ENCODE measurements at regions of chr17 and their contacts with region 1.

Region 1: GRCh38 chr17:59829217-59830006 is 63.3 kb downstream of the TUBD1 start:
- DNase-seq: peak; percentile 57
- H3K4me3 Mint-ChIP-seq: peak overlapping the region; percentile 85
- H3K27ac Mint-ChIP-seq: peak overlapping the region; percentile 99
- H3K4me1 Mint-ChIP-seq: peaks cover 64% of the 10 kb centered on the region
- H3K27me3 Mint-ChIP-seq: no peaks in the 10 kb centered on the region

Region 2: DNA sequence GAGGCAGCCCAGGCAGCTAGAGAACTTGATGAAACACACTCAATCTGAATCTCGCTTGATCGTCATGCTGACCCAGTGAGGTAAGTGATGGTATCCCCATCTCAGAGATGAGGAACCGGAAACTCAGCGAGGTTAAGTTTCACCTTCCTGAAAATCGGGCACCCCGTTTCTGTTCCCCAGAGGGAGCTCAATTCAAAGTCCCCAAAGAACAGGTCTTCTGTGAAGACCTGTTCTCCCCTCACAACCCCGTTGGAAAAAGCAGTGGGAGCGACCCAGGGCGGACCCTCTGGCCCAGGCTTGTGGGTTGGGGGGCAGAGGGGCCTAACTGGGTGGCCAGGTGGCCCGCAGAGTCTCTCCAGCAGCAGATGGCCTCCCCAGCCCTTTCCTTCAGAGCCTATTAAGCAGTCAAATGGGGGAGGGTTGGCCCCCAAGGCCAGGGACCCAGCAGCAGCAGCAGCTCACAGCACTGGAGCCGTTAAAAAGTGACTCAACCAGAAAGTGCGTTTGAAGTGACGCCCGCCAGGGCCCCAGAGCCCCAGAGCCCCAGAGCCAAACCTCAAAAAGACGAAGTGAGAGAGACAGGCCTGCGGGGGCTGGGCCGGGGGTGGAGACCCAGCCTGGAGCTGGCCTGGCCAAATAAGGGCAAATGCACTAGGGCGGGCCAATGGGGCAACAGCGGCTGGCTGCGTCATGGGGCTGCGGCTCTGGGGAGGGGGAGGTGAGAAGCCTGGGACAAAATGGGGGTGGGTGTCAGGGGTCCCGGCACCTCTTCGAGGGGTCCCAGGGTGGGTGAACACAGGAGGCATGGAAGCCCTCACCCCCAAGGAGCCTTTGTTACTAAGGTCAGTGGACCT is 1491.6 kb before region 1 on chr17:
- intact Hi-C with region 1: loop called (anchors 5 kb)
- DNase-seq: peak; percentile 93
- H3K4me3 Mint-ChIP-seq: peak overlapping the region; percentile 99
- H3K27ac Mint-ChIP-seq: peak overlapping the region; percentile 99
- H3K4me1 Mint-ChIP-seq: peaks cover 35% of the 10 kb centered on the region
- H3K27me3 Mint-ChIP-seq: no peaks in the 10 kb centered on the region

Region 3: GRCh38 chr17:59361916-59362810 is 467.2 kb before region 1 on chr17:
- intact Hi-C with region 1: loop called (anchors 10 kb)
- DNase-seq: peak; percentile 49
- H3K4me3 Mint-ChIP-seq: peak overlapping the region; percentile 72
- H3K27ac Mint-ChIP-seq: peak overlapping the region; percentile 95
- H3K4me1 Mint-ChIP-seq: peaks cover 65% of the 10 kb centered on the region
- H3K27me3 Mint-ChIP-seq: no peaks in the 10 kb centered on the region

Region 4: GRCh38 chr17:59688008-59688407 is 141.4 kb before region 1 on chr17:
- intact Hi-C with region 1: no loop called
- DNase-seq: no peak
- H3K4me3 Mint-ChIP-seq: no peak overlapping the region
- H3K27ac Mint-ChIP-seq: no peak overlapping the region
- H3K4me1 Mint-ChIP-seq: peaks cover 10% of the 10 kb centered on the region
- H3K27me3 Mint-ChIP-seq: no peaks in the 10 kb centered on the region

Region 5: DNA sequence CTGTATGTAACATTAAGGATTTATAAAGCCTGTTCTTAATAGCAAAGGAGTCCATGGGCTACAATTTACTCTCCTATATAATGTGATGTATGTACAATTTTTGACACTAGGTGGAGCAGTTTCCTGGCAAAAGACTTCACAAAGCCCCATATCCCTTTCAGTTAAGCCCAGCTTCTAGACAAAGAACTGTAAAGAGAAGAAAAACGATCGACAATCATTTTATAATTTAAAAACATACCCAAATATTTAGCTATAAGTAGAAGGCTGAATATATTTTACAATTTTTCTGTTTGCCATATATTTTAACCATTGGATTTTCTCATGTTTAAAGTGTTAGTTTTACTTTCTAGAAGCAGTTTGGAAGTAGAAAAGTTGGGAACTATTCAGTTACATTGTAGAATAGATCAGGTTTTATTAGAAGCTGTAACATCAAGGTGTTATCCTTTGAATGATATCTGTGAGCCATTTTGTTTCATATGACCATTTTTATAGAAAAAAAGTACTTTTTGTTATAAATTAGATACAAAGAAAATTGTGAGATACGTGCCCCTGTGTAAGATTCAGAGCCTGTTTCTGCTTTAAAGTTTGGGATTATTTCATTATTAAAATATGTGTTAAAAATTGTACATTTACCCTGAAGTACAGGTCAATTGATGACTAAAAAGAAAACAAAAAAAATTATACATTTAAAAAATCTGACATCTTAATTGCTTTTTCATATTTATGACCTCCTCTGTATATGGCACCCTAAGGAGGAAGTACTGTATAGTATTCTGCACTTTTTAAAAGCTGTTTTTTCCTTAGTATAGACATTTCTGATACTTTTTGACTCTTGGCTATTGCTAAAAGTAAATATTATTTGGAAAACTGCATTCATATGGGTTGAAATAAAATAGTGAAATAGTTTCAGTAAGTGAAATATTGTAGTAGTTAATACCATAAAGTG is 75.6 kb before region 1 on chr17:
- intact Hi-C with region 1: loop called (anchors 1 kb)
- DNase-seq: no peak
- H3K4me3 Mint-ChIP-seq: peak overlapping the region; percentile 68
- H3K27ac Mint-ChIP-seq: peak overlapping the region; percentile 85
- H3K4me1 Mint-ChIP-seq: peaks cover 53% of the 10 kb centered on the region
- H3K27me3 Mint-ChIP-seq: no peaks in the 10 kb centered on the region

Region 6: DNA sequence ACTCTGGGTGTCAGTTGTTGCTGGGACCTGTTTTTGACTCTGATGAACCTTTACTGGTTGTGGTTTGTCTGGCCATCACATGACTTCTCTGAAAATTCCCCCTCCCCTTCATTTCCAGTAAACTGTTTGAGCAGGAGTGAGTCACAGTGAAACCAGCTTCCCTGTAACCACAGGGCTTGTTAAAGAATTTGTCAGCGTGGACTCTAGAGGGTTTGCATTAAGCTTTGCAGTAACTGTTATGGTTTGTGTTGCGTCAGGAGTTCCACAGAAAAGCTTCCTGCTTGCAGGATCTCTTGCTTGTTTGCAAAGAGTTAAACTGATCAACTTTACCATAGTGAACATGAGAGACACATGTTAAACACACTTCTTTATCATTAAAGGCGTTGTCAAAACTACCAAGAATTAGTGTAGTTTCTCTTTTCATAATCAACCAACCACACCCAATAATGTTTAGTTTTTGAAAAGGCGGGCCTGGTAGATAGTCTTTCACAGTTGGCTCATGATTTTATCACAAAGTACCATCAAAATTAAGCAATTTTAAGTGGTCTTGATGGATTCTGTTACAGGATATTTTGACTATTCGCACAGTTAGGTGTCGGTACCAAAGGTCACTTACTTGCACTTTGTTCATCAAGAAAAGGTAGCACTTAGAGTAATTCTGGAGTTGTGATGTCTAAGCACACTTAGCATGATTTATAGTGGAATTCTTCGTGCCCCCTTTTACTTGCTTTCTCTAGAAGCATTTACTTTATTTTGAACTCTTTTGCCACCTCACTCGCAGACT is 42.7 kb before region 1 on chr17:
- intact Hi-C with region 1: loop called (anchors 1 kb)
- DNase-seq: peak; percentile 85
- H3K4me3 Mint-ChIP-seq: peak overlapping the region; percentile 64
- H3K27ac Mint-ChIP-seq: peak overlapping the region; percentile 99
- H3K4me1 Mint-ChIP-seq: peaks cover 58% of the 10 kb centered on the region
- H3K27me3 Mint-ChIP-seq: no peaks in the 10 kb centered on the region

Region 7: GRCh38 chr17:59796785-59797205 is 32.6 kb before region 1 on chr17:
- intact Hi-C with region 1: no loop called
- DNase-seq: no peak
- H3K4me3 Mint-ChIP-seq: no peak overlapping the region
- H3K27ac Mint-ChIP-seq: no peak overlapping the region
- H3K4me1 Mint-ChIP-seq: peaks cover 27% of the 10 kb centered on the region
- H3K27me3 Mint-ChIP-seq: no peaks in the 10 kb centered on the region

Region 8: DNA sequence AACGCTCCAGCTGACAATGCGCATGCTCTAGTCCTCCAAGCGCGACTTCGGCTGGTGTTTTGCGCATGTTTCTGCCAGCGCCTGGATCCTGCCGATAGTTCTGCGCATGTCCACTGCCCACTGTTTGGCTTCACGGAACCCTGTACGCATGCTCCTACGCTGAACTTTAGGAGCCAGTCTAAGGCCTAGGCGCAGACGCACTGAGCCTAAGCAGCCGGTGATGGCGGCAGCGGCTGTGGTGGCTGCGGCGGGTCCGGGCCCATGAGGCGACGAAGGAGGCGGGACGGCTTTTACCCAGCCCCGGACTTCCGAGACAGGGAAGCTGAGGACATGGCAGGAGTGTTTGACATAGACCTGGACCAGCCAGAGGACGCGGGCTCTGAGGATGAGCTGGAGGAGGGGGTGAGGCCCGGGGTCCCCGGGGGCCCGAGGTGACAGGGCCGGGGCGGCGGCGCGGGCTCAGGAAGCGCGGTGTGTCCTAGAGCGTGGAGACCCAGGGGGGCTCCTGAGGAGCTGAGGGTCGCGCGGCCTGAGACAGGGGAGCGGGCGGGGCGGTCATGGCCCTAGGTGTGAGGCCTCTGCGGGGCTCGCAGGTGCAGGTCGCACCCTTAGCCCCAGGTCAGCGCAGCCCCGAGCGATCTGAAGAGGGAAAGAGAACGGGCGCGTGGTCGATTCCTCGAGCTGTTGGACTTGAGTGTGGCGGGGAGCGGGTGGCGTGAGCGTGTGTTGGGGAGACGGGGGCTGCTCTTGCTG is 63.7 kb after region 1 on chr17 and contains the starts of genes RPS6KB1 and TUBD1:
- intact Hi-C with region 1: loop called (anchors 5 kb)
- DNase-seq: peak; percentile 98
- H3K4me3 Mint-ChIP-seq: peak within 1 kb of the TSS; percentile 97
- H3K27ac Mint-ChIP-seq: peak within 1 kb of the TSS; percentile 97
- H3K4me1 Mint-ChIP-seq: peaks cover 29% of the 10 kb centered on the region
- H3K27me3 Mint-ChIP-seq: no peaks in the 10 kb centered on the region
- total RNA-seq, gene RPS6KB1: 65.9 and 70.1 TPM in 2 replicates
- total RNA-seq, gene TUBD1: 8.2 and 9.3 TPM in 2 replicates

Measured in activated T-helper 2 cell treated with anti-CD3 and anti-CD28 coated beads, Interferon-gamma antibody, Interleukin-2, Interleukin-4, amounts not matched to agents 10 μg/mL and 5 μg/mL and 100 μg/mL, durations not matched to agents 14 hours and 24 hours and 36 hours (primary cell).